ENCODE measurements at regions of chr5 and their contacts with region 1.

Region 1: DNA sequence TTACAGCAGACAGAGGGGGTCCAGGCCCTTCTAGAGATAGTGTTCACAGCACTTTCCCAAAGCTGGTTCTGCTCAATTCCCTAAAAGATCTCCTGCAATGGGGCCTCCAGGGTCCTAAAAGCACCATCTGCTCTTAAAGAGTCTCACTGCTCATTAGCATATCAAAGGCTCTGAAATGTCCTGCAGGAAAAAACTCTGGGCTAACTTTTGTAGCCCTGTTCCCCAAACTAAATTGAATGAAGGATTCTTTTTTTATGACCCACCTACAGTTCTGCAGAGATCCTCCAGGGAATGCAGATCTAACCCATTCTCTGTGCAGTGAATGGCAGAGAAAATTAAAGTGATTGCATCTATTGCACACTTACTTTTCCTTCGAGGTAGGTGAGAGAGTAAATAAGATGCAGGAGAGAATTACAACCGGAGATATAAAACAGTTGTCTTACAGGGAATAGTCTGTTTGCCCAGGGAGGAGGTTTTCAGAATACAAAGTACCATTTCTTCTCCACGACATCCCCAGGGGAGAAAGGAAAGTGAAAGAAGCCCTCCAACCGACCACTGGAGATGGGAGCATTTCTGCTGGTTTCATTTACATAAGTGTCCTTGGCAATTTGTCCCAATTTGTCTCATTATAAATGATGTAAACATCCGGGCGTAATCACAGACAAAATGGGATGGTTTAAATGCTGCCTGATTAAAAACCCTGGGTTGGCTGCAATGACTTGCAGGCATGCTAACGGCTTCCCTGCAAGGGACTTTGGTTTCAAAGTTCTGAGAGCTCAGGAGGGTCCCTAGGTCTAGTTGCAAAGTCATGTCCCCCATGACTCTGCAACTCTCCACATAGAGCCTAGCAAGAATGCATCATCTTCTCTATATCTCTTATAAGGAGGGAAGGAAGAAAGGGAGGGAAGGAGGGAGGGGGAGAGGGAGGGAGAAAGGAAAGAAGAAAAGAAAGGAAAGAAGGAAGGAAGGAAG is 114.0 kb downstream of the KCNIP1 start:
- DNase-seq: no peak
- H3K4me3 ChIP-seq: no peak overlapping the region
- H3K27ac ChIP-seq: no peak overlapping the region
- H3K4me1 ChIP-seq: no peaks in the 10 kb centered on the region
- H3K27me3 ChIP-seq: no peaks in the 10 kb centered on the region
- CTCF ChIP-seq: no peak
- POLR2A ChIP-seq: no peak

Region 2: GRCh38 chr5:170436335-170436734 is 181.5 kb before region 1 on chr5:
- intact Hi-C with region 1: loop called (anchors 2 kb)
- DNase-seq: no peak
- H3K4me3 ChIP-seq: no peak overlapping the region
- H3K27ac ChIP-seq: no peak overlapping the region
- H3K4me1 ChIP-seq: no peaks in the 10 kb centered on the region
- H3K27me3 ChIP-seq: no peaks in the 10 kb centered on the region
- CTCF ChIP-seq: no peak
- POLR2A ChIP-seq: no peak

Region 3: DNA sequence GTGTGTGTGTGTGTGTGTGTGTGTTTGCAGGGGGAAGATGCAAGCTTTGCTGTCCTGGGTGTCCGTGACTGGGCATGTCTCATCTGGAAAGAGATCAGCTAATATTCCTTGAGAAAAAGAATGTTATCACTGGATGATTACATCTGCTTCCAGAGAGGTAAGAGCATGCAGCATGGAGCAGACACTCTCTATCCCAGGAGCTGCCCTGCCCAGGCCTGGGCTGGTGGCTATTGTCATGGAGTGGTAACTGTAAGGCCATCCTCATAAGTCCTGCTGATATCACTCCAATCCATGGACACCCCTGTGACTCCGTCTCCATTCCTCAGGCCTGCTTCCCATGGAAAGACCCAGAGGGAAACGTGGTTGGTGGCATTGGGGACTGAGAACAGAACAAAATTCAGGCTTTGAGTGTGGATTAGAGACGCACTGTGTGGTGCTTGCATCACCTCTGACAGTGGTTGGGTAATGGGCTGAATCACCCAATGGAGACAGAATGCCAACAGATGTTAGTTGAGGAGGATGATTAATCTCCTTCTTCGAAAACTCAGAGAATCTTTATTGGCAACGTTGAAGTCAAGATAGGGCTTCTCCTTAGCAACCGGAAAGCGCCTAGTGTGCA is 165.9 kb before region 1 on chr5:
- intact Hi-C with region 1: no loop called
- DNase-seq: no peak
- H3K4me3 ChIP-seq: no peak overlapping the region
- H3K27ac ChIP-seq: no peak overlapping the region
- H3K4me1 ChIP-seq: no peaks in the 10 kb centered on the region
- H3K27me3 ChIP-seq: no peaks in the 10 kb centered on the region
- CTCF ChIP-seq: no peak
- POLR2A ChIP-seq: no peak